Mammary epithelial cell (primary cell): ENCODE measurements at regions of chr15 and their contacts with region 1.

Region 1: DNA sequence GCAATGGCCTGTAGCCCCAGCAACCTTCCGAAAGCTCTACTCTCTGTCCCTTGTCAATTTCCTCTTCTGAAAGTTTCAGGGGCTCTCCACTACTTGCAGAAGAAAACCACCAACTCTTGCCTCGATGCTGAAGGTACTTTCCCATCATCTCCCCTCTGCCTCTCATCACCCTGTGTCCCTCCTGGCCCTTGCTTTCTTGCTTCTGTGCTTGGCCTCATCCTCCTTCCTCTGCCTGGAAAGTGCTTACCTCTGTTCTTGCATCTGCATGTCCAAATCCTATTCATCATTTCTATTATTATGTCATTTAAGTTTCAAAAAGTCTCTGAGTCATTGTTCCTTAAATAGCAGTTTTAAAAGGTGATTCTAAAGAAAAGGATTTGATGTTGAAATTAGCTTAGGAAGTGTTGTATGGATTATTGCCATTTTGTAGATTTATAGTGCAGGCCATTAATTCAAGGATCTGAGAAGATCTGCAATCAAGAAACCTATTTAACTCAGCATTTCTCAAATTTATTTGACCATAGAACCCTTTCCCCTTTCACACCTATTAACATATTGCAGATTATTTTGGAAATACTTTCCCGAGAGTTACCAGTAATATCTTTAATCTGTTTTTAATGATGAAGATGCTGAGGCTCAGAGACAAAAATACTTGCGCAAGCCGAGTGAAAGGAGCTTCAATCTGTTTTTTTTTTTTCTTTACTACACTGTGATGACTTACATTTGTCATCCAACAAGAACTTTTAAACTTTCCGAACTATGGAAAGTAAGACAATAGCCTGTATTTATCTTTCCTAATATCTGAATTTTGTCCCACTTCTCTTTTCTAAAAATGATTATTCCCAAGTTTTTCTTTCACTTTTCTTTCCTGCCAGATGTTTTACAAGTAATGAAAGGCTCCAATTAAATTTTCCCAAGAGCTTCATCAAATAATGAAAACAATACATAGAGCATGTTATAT is 22.3 kb upstream of the CFAP161 start:
- DNase-seq: peak; percentile 79
- H3K4me3 ChIP-seq: no peak overlapping the region
- H3K27ac ChIP-seq: peak overlapping the region; percentile 88
- H3K4me1 ChIP-seq: peaks cover 33% of the 10 kb centered on the region
- H3K27me3 ChIP-seq: no peaks in the 10 kb centered on the region
- CTCF ChIP-seq: no peak

Region 2: GRCh38 chr15:80629355-80629754 is 482.4 kb before region 1 on chr15:
- CTCF ChIA-PET with region 1: no interaction called
- dilution Hi-C with region 1: no loop called
- in situ Hi-C with region 1: no loop called
- intact Hi-C with region 1: no loop called
- DNase-seq: no peak
- H3K4me3 ChIP-seq: no peak overlapping the region
- H3K27ac ChIP-seq: no peak overlapping the region
- H3K4me1 ChIP-seq: no peaks in the 10 kb centered on the region
- H3K27me3 ChIP-seq: no peaks in the 10 kb centered on the region
- CTCF ChIP-seq: no peak

Region 3: DNA sequence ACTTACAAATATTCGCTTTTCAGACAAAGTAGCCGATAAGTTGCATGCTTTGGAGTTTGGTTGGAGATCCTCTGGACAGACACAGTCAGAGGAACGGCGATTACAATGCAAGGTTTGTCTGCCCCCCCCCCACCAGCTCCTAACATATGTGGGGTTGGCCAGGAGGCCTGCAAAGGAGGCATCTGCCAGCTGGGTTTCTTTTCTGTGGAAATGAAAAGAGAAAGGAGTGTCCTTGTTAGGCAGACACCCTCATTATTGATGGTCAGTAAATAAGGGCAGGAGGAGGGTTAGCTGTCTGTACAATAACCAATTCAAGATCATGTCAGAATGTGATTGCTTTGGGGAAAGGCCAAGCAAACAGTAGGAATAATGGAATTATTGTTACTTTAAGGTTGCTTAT is 62.0 kb before region 1 on chr15:
- CTCF ChIA-PET with region 1: no interaction called
- dilution Hi-C with region 1: no loop called
- in situ Hi-C with region 1: no loop called
- intact Hi-C with region 1: no loop called
- DNase-seq: no peak
- H3K4me3 ChIP-seq: no peak overlapping the region
- H3K27ac ChIP-seq: no peak overlapping the region
- H3K4me1 ChIP-seq: no peaks in the 10 kb centered on the region
- H3K27me3 ChIP-seq: no peaks in the 10 kb centered on the region
- CTCF ChIP-seq: no peak

Region 4: GRCh38 chr15:81189583-81190283 is 77.9 kb after region 1 on chr15:
- CTCF ChIA-PET with region 1: no interaction called
- dilution Hi-C with region 1: no loop called
- in situ Hi-C with region 1: no loop called
- intact Hi-C with region 1: loop called (anchors 2 kb)
- DNase-seq: peak; percentile 63
- H3K4me3 ChIP-seq: no peak overlapping the region
- H3K27ac ChIP-seq: peak overlapping the region; percentile 31
- H3K4me1 ChIP-seq: peaks cover 17% of the 10 kb centered on the region
- H3K27me3 ChIP-seq: no peaks in the 10 kb centered on the region
- CTCF ChIP-seq: no peak